ENCODE measurements at regions of chr6 and their contacts with region 1.

Region 1: GRCh38 chr6:24689964-24690363 is 23.1 kb downstream of the ACOT13 start:
- DNase-seq: no peak
- H3K4me3 ChIP-seq: no peak overlapping the region
- H3K27ac ChIP-seq: no peak overlapping the region
- H3K4me1 ChIP-seq: peaks cover 32% of the 10 kb centered on the region
- H3K27me3 ChIP-seq: no peaks in the 10 kb centered on the region
- CTCF ChIP-seq: no peak

Region 2: DNA sequence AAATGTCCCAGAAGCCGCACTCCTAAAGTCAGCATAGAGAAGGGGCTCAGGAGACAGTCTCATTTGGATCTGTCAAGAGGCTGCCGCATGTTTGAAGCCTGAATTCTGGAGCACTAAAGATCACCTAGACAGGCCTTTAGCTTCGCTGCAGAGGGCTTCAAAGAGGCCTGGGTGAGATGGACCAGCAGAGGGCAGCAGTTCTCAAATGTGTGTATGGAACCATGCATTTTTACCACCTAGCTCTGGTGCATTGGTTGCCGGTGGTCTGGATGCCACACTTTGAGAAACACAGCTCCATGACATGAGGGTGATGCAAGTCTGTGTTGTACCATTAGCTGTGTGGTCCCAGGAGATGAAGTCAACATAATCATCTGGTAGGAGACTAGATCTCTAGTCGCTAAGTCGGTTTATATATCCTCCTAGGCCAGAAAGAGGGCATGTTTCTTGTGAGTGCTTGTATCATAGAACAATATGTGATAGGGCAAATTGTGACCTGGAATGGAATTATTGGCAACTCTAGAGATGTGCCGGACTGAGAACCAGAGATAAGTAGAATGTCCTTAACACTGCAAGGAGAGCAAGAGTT is 108.8 kb before region 1 on chr6:
- intact Hi-C with region 1: loop called (anchors 5 kb)
- DNase-seq: peak; percentile 57
- H3K4me3 ChIP-seq: no peak overlapping the region
- H3K27ac ChIP-seq: no peak overlapping the region
- H3K4me1 ChIP-seq: peaks cover 13% of the 10 kb centered on the region
- H3K27me3 ChIP-seq: no peaks in the 10 kb centered on the region
- CTCF ChIP-seq: peak; percentile 89

Region 3: GRCh38 chr6:24855395-24856245 is 165.7 kb after region 1 on chr6:
- intact Hi-C with region 1: no loop called
- DNase-seq: peak; percentile 19
- H3K4me3 ChIP-seq: no peak overlapping the region
- H3K27ac ChIP-seq: peak overlapping the region; percentile 45
- H3K4me1 ChIP-seq: peaks cover 22% of the 10 kb centered on the region
- H3K27me3 ChIP-seq: no peaks in the 10 kb centered on the region
- CTCF ChIP-seq: peak; percentile 91